ENCODE measurements at regions of chr21 and their contacts with region 1.

Region 1: GRCh38 chr21:33655591-33656221 is 13.4 kb downstream of the ITSN1 start:
- DNase-seq: peak; percentile 97
- ATAC-seq: peak; percentile 88
- H3K4me3 ChIP-seq: no peak overlapping the region
- H3K27ac ChIP-seq: peak overlapping the region; percentile 92
- H3K4me1 ChIP-seq: peaks cover 11% of the 10 kb centered on the region
- H3K27me3 ChIP-seq: no peaks in the 10 kb centered on the region
- CTCF ChIP-seq: no peak
- POLR2A ChIP-seq: no peak
- RAD21 ChIP-seq: no peak

Region 2: GRCh38 chr21:33685613-33686197 is 30.0 kb after region 1 on chr21:
- CTCF ChIA-PET with region 1: interaction called, 4 read pairs
- POLR2A ChIA-PET with region 1: no interaction called
- dilution Hi-C with region 1: no loop called
- in situ Hi-C with region 1: no loop called
- intact Hi-C with region 1: loop called (anchors 2 kb)
- DNase-seq: peak; percentile 66
- ATAC-seq: peak; percentile 78
- H3K4me3 ChIP-seq: no peak overlapping the region
- H3K27ac ChIP-seq: no peak overlapping the region
- H3K4me1 ChIP-seq: peaks cover 11% of the 10 kb centered on the region
- H3K27me3 ChIP-seq: no peaks in the 10 kb centered on the region
- CTCF ChIP-seq: no peak
- POLR2A ChIP-seq: no peak
- RAD21 ChIP-seq: no peak

Measured in IMR-90 (cell line).